HCT116 (cell line): ENCODE measurements at regions of chr12 and their contacts with region 1.

Region 1: GRCh38 chr12:20798561-20798960 is 11.9 kb upstream of the SLCO1B3 start:
- DNase-seq: peak; percentile 7
- ATAC-seq: peak; percentile 69
- H3K4me3 ChIP-seq: no peak overlapping the region
- H3K27ac ChIP-seq: no peak overlapping the region
- H3K4me1 ChIP-seq: no peaks in the 10 kb centered on the region
- H3K27me3 ChIP-seq: no peaks in the 10 kb centered on the region
- CTCF ChIP-seq: peak; percentile 29 to 48 (median 35); a peak in 4 of 6 replicates
- POLR2A ChIP-seq: no peak
- RAD21 ChIP-seq: peak; percentile 63

Region 2: GRCh38 chr12:20883288-20883687 is 84.7 kb after region 1 on chr12:
- CTCF ChIA-PET with region 1: no interaction called
- POLR2A ChIA-PET with region 1: no interaction called
- RAD21 ChIA-PET with region 1: no interaction called
- intact Hi-C with region 1: no loop called
- DNase-seq: no peak
- ATAC-seq: no peak
- H3K4me3 ChIP-seq: no peak overlapping the region
- H3K27ac ChIP-seq: no peak overlapping the region
- H3K4me1 ChIP-seq: no peaks in the 10 kb centered on the region
- H3K27me3 ChIP-seq: no peaks in the 10 kb centered on the region
- CTCF ChIP-seq: no peak
- POLR2A ChIP-seq: no peak
- RAD21 ChIP-seq: no peak

Region 3: GRCh38 chr12:21169878-21170472 is 371.4 kb after region 1 on chr12:
- CTCF ChIA-PET with region 1: no interaction called
- POLR2A ChIA-PET with region 1: no interaction called
- RAD21 ChIA-PET with region 1: no interaction called
- intact Hi-C with region 1: loop called (anchors 2 kb)
- DNase-seq: peak; percentile 37
- ATAC-seq: peak; percentile 74
- H3K4me3 ChIP-seq: no peak overlapping the region
- H3K27ac ChIP-seq: no peak overlapping the region
- H3K4me1 ChIP-seq: no peaks in the 10 kb centered on the region
- H3K27me3 ChIP-seq: no peaks in the 10 kb centered on the region
- CTCF ChIP-seq: peak; percentile 73 to 94 (median 74)
- POLR2A ChIP-seq: no peak
- RAD21 ChIP-seq: peak; percentile 83